ENCODE measurements at regions of chr1 and their contacts with region 1.

Region 1: GRCh38 chr1:78688701-78689100 is 39.1 kb downstream of the IFI44 start:
- DNase-seq: peak; percentile 57
- H3K4me3 ChIP-seq: no peak overlapping the region
- H3K27ac ChIP-seq: no peak overlapping the region
- H3K4me1 ChIP-seq: no peaks in the 10 kb centered on the region
- H3K27me3 ChIP-seq: no peaks in the 10 kb centered on the region
- CTCF ChIP-seq: peak; percentile 54

Region 2: GRCh38 chr1:78831731-78832360 is 143.1 kb after region 1 on chr1:
- CTCF ChIA-PET with region 1: no interaction called
- POLR2A ChIA-PET with region 1: no interaction called
- intact Hi-C with region 1: loop called (anchors 2 kb)
- DNase-seq: peak; percentile 80
- H3K4me3 ChIP-seq: no peak overlapping the region
- H3K27ac ChIP-seq: no peak overlapping the region
- H3K4me1 ChIP-seq: peaks cover 25% of the 10 kb centered on the region
- H3K27me3 ChIP-seq: no peaks in the 10 kb centered on the region
- CTCF ChIP-seq: no peak

Region 3: GRCh38 chr1:79197421-79197820 is 508.7 kb after region 1 on chr1:
- CTCF ChIA-PET with region 1: interaction called, 8 read pairs
- POLR2A ChIA-PET with region 1: no interaction called
- intact Hi-C with region 1: loop called (anchors 5 kb)
- DNase-seq: peak; percentile 60
- H3K4me3 ChIP-seq: no peak overlapping the region
- H3K27ac ChIP-seq: no peak overlapping the region
- H3K4me1 ChIP-seq: peaks cover 3% of the 10 kb centered on the region
- H3K27me3 ChIP-seq: no peaks in the 10 kb centered on the region
- CTCF ChIP-seq: peak; percentile 63